PC-3 (cell line): ENCODE measurements at regions of chr7 and their contacts with region 1.

Region 1: DNA sequence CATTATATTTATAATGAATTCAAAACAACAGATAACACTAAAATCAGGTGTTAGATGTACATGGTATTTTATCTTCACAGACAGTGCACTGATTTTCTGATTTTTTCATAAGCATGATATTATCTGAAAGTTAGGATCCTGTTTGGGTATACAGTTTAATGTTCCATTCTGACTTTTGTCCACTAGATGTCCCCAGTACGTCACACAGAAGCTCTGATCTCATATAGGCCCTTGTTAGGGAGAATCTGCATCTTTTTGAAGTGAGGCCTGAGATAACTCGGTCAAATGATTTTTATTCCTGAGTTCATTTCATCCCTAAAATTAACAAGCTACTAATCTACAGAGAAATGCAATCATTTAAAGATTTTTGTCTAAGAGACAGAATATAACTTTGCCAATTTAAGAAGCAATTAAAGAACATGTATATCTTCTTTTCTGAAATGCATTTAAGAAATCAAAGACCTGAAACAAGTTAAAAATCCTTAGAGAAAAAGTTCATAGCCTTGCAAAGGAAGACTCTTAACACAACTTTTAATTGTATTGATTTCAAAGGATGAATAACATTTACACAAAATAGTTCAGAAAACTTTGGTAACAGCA is 72.0 kb upstream of the TES start:
- DNase-seq: peak; percentile 82
- ATAC-seq: peak; percentile 87
- H3K4me3 ChIP-seq: no peak overlapping the region
- H3K27ac ChIP-seq: peak overlapping the region; percentile 21; the same call in 1 of the 2 replicates
- H3K4me1 ChIP-seq: peaks cover 14% of the 10 kb centered on the region
- H3K27me3 ChIP-seq: no peaks in the 10 kb centered on the region
- CTCF ChIP-seq: peak; percentile 92

Region 2: DNA sequence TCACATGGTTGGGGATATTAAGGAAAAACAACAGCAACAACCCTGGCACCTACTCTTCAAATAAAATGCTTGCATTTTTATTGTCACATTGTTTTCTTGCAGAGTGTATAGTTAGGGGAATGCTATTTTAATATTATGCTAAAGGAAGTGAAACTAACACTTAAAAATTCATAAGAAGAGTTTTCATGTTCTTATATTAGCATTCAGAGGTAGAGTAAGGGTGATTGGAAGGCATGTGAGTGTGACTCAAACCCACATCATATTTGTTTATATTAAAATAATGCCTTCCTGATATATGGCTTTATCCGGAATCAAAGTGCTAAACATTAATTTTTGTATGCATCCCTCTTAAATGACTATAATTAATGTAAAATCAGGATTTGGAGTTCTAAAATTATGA is 12.3 kb after region 1 on chr7:
- CTCF ChIA-PET with region 1: interaction called, 3 read pairs
- POLR2A ChIA-PET with region 1: no interaction called
- intact Hi-C with region 1: loop called (anchors 1 kb)
- DNase-seq: peak; percentile 25
- ATAC-seq: peak; percentile 67
- H3K4me3 ChIP-seq: no peak overlapping the region
- H3K27ac ChIP-seq: peak overlapping the region; percentile 24; the same call in 1 of the 2 replicates
- H3K4me1 ChIP-seq: peaks cover 36% of the 10 kb centered on the region
- H3K27me3 ChIP-seq: no peaks in the 10 kb centered on the region
- CTCF ChIP-seq: no peak

Region 3: DNA sequence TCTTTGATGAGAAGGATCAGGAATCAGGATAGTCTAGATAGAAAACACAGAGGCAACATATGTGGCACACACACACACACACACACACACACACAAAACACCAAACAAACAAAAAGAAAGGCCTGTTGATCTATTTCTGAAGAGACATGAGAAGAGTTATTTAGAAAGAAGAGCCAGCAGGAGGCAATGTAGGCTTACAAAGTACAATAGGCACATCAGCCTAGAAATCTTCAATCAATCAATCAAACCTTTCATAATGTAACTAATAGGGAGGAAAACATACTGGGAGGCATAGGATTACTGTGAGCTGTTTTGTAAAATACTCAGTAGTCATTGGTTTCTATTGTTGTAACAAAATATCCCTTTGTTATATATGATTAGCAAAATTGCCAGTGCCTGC is 24.7 kb after region 1 on chr7:
- CTCF ChIA-PET with region 1: no interaction called
- POLR2A ChIA-PET with region 1: no interaction called
- intact Hi-C with region 1: loop called (anchors 2 kb)
- DNase-seq: peak; percentile 28
- ATAC-seq: peak; percentile 43; the same call in 1 of the 2 replicates
- H3K4me3 ChIP-seq: no peak overlapping the region
- H3K27ac ChIP-seq: no peak overlapping the region
- H3K4me1 ChIP-seq: peaks cover 4% of the 10 kb centered on the region; the same call in 1 of the 2 replicates
- H3K27me3 ChIP-seq: no peaks in the 10 kb centered on the region
- CTCF ChIP-seq: peak; percentile 57

Region 4: DNA sequence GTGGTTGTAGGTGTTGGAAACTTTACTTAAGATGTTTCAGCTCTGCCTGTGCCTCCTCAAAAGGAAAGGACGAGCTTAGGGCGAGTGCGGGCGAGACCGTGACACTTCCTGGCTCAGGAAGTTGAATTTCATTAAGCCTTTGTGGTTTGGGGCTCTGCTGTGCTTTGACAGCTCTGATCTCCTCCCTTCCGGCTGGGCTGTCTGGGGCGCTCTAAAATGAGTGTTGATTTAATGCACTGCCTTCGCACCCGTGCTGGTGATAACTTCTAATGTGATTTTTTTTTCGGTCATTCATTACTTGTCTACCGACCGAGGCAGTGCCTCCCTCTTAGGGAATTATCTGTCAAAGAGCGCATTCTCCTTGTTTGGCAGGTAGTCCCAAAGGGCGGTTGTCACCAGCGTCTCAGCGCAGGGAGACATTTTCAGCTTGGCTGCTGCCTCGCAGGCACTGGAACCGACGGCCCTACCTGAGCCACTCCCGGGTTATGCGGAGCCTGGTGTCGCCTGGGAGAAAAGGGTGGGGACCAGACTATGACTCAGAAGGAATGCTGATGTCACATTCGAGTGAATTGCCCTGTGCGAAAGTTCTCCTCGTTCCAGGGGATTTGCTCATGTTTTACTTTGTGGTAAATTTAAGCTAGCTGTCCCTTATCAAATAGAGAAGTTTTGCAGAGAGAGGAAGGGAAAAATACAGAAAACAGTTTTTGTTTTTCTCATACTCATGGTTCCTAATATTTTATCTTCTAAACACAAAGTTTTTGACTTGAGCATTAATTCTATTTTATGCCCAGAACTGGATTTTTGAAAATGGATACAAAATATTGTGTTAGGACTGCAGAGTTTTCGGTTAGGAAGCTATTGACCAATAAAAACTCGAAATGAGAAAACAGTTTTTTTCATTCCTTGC is 73.0 kb after region 1 on chr7:
- CTCF ChIA-PET with region 1: no interaction called
- POLR2A ChIA-PET with region 1: no interaction called
- intact Hi-C with region 1: loop called (anchors 2 kb)
- DNase-seq: peak; percentile 95
- ATAC-seq: peak; percentile 75
- H3K4me3 ChIP-seq: peak overlapping the region; percentile 93
- H3K27ac ChIP-seq: peak overlapping the region; percentile 97
- H3K4me1 ChIP-seq: peaks cover 40% of the 10 kb centered on the region
- H3K27me3 ChIP-seq: no peaks in the 10 kb centered on the region
- CTCF ChIP-seq: no peak

Region 5: GRCh38 chr7:116236020-116236630 is 97.8 kb after region 1 on chr7:
- CTCF ChIA-PET with region 1: no interaction called
- POLR2A ChIA-PET with region 1: no interaction called
- intact Hi-C with region 1: loop called (anchors 1 kb)
- DNase-seq: peak; percentile 70
- ATAC-seq: peak; percentile 42
- H3K4me3 ChIP-seq: no peak overlapping the region
- H3K27ac ChIP-seq: no peak overlapping the region
- H3K4me1 ChIP-seq: peaks cover 26% of the 10 kb centered on the region
- H3K27me3 ChIP-seq: no peaks in the 10 kb centered on the region
- CTCF ChIP-seq: peak; percentile 72

Region 6: DNA sequence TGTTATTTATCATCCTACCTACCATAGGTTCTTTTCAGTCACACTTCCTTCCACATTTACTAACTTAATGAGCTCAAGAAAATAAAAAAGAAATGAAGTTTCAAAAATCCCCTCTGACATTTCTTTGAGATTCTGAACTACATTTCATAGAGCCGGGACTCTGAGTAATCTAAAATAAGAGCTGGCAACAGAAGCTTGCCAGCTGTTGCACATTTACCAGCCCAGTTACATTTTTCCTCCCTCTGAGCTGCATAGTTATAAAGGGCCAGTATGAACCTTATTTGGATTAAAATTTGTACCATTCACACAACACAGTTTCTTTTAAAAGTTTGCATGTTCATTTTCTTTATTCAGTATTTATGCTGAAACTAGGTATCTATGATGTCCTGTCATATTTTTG is 241.7 kb after region 1 on chr7:
- CTCF ChIA-PET with region 1: no interaction called
- POLR2A ChIA-PET with region 1: no interaction called
- intact Hi-C with region 1: no loop called
- DNase-seq: no peak
- ATAC-seq: no peak
- H3K4me3 ChIP-seq: no peak overlapping the region
- H3K27ac ChIP-seq: no peak overlapping the region
- H3K4me1 ChIP-seq: peaks cover 9% of the 10 kb centered on the region
- H3K27me3 ChIP-seq: no peaks in the 10 kb centered on the region
- CTCF ChIP-seq: no peak

Region 7: GRCh38 chr7:116588641-116589594 is 450.6 kb after region 1 on chr7:
- CTCF ChIA-PET with region 1: no interaction called
- POLR2A ChIA-PET with region 1: no interaction called
- intact Hi-C with region 1: loop called (anchors 2 kb)
- DNase-seq: peak; percentile 88
- ATAC-seq: peak; percentile 49
- H3K4me3 ChIP-seq: no peak overlapping the region
- H3K27ac ChIP-seq: peak overlapping the region; percentile 3; the same call in 1 of the 2 replicates
- H3K4me1 ChIP-seq: peaks cover 26% of the 10 kb centered on the region
- H3K27me3 ChIP-seq: no peaks in the 10 kb centered on the region
- CTCF ChIP-seq: peak; percentile 87